Naive thymus-derived CD4-positive, alpha-beta T cell (primary cell): ENCODE measurements at regions of chr5 and their contacts with region 1.

Region 1: GRCh38 chr5:14996997-14997396 is 125.4 kb upstream of the ANKH start:
- DNase-seq: no peak
- ATAC-seq: peak; percentile 29
- H3K4me3 ChIP-seq: no peak overlapping the region
- H3K4me3 Mint-ChIP-seq: no peak overlapping the region
- H3K27ac ChIP-seq: no peak overlapping the region
- H3K27ac Mint-ChIP-seq: no peak overlapping the region
- H3K4me1 ChIP-seq: peaks cover 5% of the 10 kb centered on the region in 2 donors
- H3K4me1 Mint-ChIP-seq: peaks cover 6 to 33% (median 12%) of the 10 kb centered on the region in 7 donors
- H3K27me3 ChIP-seq: no peaks in the 10 kb centered on the region
- H3K27me3 Mint-ChIP-seq: peaks cover 0 to 18% (median 0%) of the 10 kb centered on the region in 5 donors

Region 2: DNA sequence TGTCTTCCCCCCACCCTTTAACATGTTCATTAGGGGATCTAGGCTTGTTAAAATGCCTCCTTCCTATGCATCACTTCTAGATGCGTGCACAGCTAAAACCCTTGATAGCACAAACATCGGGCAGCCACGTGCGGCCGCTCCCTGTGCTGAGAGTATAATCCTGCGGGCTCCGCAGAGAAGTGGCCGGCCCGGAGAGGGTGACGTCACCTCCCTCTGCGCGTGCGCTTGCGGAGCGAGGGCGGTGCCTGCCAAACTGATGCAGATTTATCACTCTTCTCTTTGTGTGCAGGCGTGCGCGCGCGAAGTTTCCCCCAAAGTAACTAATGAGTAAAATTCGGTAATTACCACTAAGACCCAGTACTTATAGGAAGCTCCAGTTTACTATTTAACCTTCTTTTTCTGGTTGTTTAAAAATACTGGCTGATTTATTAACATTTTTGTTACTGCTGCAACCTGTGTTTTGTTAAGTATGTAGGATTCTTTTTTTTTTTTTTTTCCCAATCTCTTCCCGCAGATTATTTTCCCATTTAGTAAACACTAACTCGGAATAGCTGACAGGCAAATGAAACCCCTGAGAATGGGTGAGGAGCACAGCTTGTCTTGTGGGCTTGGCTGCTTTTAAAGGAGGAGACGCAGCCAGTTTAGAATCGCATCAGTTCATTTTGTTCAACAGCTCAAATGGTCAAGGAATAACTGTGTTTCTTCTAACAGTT is 732.2 kb before region 1 on chr5:
- CTCF ChIA-PET with region 1: no interaction called
- POLR2A ChIA-PET with region 1: no interaction called
- intact Hi-C with region 1: no loop called
- DNase-seq: peak; percentile 30 to 78 (median 60)
- ATAC-seq: peak; percentile 93
- H3K4me3 ChIP-seq: peak overlapping the region; percentile 27
- H3K4me3 Mint-ChIP-seq: peak overlapping the region; percentile 51 to 81 (median 66)
- H3K27ac ChIP-seq: no peak overlapping the region
- H3K27ac Mint-ChIP-seq: peak overlapping the region in 1 of 9 donors; percentile 65
- H3K4me1 ChIP-seq: no peaks in the 10 kb centered on the region
- H3K4me1 Mint-ChIP-seq: peaks cover 6 to 12% (median 6%) of the 10 kb centered on the region in 7 donors
- H3K27me3 ChIP-seq: peaks cover 0 to 5% of the 10 kb centered on the region in 2 donors
- H3K27me3 Mint-ChIP-seq: peaks cover 11 to 41% (median 33%) of the 10 kb centered on the region in 5 donors

Region 3: GRCh38 chr5:14706615-14707021 is 290.4 kb before region 1 on chr5:
- CTCF ChIA-PET with region 1: interaction called, 3 read pairs
- POLR2A ChIA-PET with region 1: interaction called, 5 read pairs
- intact Hi-C with region 1: loop called (anchors 1 kb)
- DNase-seq: peak in 8 of 9 donors; percentile 33 to 88 (median 84)
- ATAC-seq: peak; percentile 96
- H3K4me3 ChIP-seq: peak overlapping the region; percentile 4
- H3K4me3 Mint-ChIP-seq: peak overlapping the region; percentile 74 to 94 (median 86)
- H3K27ac ChIP-seq: peak overlapping the region; percentile 72
- H3K27ac Mint-ChIP-seq: peak overlapping the region; percentile 96 to 100 (median 99)
- H3K4me1 ChIP-seq: peaks cover 34 to 75% of the 10 kb centered on the region in 2 donors
- H3K4me1 Mint-ChIP-seq: peaks cover 50 to 96% (median 86%) of the 10 kb centered on the region in 7 donors
- H3K27me3 ChIP-seq: no peaks in the 10 kb centered on the region
- H3K27me3 Mint-ChIP-seq: no peaks in the 10 kb centered on the region

Region 4: GRCh38 chr5:14809369-14810155 is 187.4 kb before region 1 on chr5:
- CTCF ChIA-PET with region 1: no interaction called
- POLR2A ChIA-PET with region 1: no interaction called
- intact Hi-C with region 1: loop called in 1 of 2 experiments (anchors 2 kb)
- DNase-seq: peak; percentile 16 to 74 (median 57)
- ATAC-seq: peak; percentile 94
- H3K4me3 ChIP-seq: peak overlapping the region; percentile 21
- H3K4me3 Mint-ChIP-seq: peak overlapping the region; percentile 56 to 87 (median 78)
- H3K27ac ChIP-seq: peak overlapping the region; percentile 50
- H3K27ac Mint-ChIP-seq: peak overlapping the region; percentile 72 to 93 (median 91)
- H3K4me1 ChIP-seq: peaks cover 38 to 42% of the 10 kb centered on the region in 2 donors
- H3K4me1 Mint-ChIP-seq: peaks cover 40 to 85% (median 63%) of the 10 kb centered on the region in 7 donors
- H3K27me3 ChIP-seq: no peaks in the 10 kb centered on the region
- H3K27me3 Mint-ChIP-seq: no peaks in the 10 kb centered on the region

Region 5: DNA sequence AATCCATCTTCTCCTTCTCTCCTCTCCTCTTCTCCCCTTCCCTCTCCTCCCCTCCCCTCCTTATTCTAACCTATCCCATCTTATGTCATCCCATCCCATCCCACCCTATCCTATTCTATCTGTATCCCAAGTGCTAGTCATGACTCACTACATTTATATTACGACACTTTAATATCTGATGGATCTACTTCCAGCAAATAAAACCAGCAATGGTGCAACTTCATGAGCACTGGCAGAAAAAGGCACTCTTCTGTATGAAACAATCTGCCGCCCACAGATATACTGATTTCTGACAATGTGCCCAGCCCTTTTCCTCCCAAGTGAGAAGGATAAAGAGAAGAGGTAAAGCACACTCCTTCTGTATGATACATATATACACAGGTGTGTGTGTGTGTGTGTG is 38.8 kb before region 1 on chr5:
- CTCF ChIA-PET with region 1: interaction called, 35 read pairs
- POLR2A ChIA-PET with region 1: interaction called, 4 read pairs
- intact Hi-C with region 1: no loop called
- DNase-seq: no peak
- ATAC-seq: no peak
- H3K4me3 ChIP-seq: no peak overlapping the region
- H3K4me3 Mint-ChIP-seq: no peak overlapping the region
- H3K27ac ChIP-seq: no peak overlapping the region
- H3K27ac Mint-ChIP-seq: no peak overlapping the region
- H3K4me1 ChIP-seq: no peaks in the 10 kb centered on the region
- H3K4me1 Mint-ChIP-seq: peaks cover 0 to 5% (median 0%) of the 10 kb centered on the region in 7 donors
- H3K27me3 ChIP-seq: no peaks in the 10 kb centered on the region
- H3K27me3 Mint-ChIP-seq: peaks cover 0 to 10% (median 0%) of the 10 kb centered on the region in 5 donors

Region 6: DNA sequence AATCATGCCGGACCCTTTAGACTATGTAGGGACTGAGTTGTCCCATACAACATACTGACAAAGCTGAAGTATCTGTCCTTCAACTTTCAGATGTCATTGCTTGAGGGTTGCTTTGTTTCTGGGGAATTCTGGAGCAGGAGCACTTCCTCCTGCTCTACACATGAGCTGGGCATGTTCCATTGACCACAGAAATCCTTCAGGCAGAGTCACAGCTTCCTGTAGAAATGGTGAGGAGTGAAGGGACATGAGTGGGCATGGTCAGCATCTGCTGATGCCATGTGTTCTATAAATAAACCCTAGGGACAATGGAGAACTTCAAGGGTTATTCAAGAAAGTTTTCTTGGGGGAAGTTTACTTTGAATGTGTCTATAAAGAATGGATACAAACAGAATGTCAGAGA is 206.4 kb after region 1 on chr5:
- CTCF ChIA-PET with region 1: no interaction called
- POLR2A ChIA-PET with region 1: no interaction called
- intact Hi-C with region 1: no loop called
- DNase-seq: no peak
- ATAC-seq: no peak
- H3K4me3 ChIP-seq: no peak overlapping the region
- H3K4me3 Mint-ChIP-seq: no peak overlapping the region
- H3K27ac ChIP-seq: no peak overlapping the region
- H3K27ac Mint-ChIP-seq: no peak overlapping the region
- H3K4me1 ChIP-seq: no peaks in the 10 kb centered on the region
- H3K4me1 Mint-ChIP-seq: no peaks in the 10 kb centered on the region
- H3K27me3 ChIP-seq: no peaks in the 10 kb centered on the region
- H3K27me3 Mint-ChIP-seq: no peaks in the 10 kb centered on the region